Naive thymus-derived CD4-positive, alpha-beta T cell (primary cell): ENCODE measurements at regions of chr6 and their contacts with region 1.

Region 1: DNA sequence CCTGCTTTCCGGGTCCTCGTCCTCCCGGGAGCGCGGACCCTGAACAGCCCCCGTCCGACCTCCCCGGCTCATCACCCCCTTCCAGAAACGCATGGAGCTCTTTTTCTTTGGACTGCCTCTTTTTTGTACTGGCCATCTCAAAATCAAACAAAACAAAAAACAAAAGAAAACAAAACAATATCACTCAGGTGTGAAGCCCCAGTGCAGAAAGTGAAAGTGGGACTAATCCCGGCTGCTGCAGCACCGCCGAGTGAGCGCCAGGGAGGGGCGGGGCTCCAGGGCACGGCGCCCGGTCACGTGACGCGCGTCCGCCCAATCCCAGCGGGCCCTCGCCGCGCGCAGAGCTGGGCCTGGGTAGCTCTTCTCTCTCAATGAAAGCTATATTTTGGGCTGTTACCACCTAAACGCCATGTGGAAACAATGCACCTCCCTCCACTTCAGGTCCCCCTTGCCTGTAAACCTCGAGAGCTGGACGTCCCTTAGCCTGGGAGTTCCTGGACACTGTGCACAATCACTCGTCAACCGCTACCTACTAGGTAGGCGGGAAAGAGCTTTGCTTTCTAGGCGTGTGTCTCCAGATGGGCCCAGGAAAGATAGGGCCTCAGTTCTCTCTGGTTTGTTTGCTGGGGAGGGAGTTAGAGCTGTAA is 93.7 kb upstream of the PRDM1 start:
- DNase-seq: peak; percentile 82 to 91 (median 89)
- ATAC-seq: peak; percentile 93
- H3K4me3 ChIP-seq: peak overlapping the region; percentile 89
- H3K4me3 Mint-ChIP-seq: peak overlapping the region; percentile 88 to 98 (median 92)
- H3K27ac ChIP-seq: peak overlapping the region; percentile 79
- H3K27ac Mint-ChIP-seq: peak overlapping the region; percentile 87 to 97 (median 93)
- H3K4me1 ChIP-seq: peaks cover 14 to 23% of the 10 kb centered on the region in 2 donors
- H3K4me1 Mint-ChIP-seq: peaks cover 16 to 58% (median 29%) of the 10 kb centered on the region in 7 donors
- H3K27me3 ChIP-seq: peaks cover 0 to 32% of the 10 kb centered on the region in 2 donors
- H3K27me3 Mint-ChIP-seq: peaks cover 48 to 73% (median 62%) of the 10 kb centered on the region in 5 donors

Region 2: DNA sequence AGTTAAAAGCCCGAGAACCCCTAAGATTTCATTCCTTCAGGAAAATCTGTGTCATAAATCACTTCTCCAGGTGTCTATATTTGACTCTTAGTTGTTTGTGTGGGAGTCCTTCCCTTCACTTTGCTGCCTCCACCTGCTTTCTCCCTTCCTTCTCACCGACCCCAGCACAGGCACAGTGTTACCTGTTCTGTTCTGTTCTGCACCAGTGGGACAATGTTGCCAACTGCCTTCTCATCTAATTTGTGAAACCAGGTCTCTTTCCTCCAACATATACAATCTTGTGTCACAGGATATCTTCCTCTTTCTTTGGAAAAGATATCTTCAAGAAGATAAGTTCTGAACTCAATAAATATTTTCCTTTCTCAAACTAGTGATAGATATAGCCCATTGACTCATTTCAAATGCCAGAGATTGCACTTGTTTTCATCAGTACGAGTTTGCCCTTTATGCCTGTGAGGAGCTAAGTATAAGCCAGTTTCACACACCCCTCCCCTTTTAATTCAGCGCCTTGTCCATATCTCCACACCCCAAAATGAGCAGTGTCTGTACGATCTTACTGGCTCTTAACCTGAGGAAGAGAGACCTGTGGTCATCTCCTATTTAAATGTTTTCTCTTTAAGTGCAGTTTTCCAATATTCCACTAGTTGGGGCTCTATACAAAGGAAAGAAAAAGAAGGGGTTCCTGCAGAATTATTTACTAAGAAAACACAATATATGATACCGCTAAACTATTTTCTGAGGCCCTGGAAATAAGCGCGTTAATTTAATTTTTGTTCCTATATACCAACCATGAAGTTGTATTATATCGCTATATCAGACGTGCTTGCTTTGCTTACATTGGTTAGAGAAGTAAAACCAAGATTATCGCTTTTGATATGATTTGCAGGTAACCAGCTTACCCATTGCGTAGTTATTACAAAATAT is 507.9 kb before region 1 on chr6:
- CTCF ChIA-PET with region 1: no interaction called
- POLR2A ChIA-PET with region 1: no interaction called
- intact Hi-C with region 1: loop called in 1 of 2 experiments (anchors 5 kb)
- DNase-seq: peak in 5 of 9 donors; percentile 7 to 36 (median 20)
- ATAC-seq: peak; percentile 59
- H3K4me3 ChIP-seq: no peak overlapping the region
- H3K4me3 Mint-ChIP-seq: no peak overlapping the region
- H3K27ac ChIP-seq: no peak overlapping the region
- H3K27ac Mint-ChIP-seq: peak overlapping the region in 2 of 9 donors; percentile 20 to 52
- H3K4me1 ChIP-seq: peaks cover 0 to 35% of the 10 kb centered on the region in 2 donors
- H3K4me1 Mint-ChIP-seq: peaks cover 0 to 63% (median 0%) of the 10 kb centered on the region in 7 donors
- H3K27me3 ChIP-seq: no peaks in the 10 kb centered on the region
- H3K27me3 Mint-ChIP-seq: peaks cover 11 to 16% (median 13%) of the 10 kb centered on the region in 5 donors

Region 3: DNA sequence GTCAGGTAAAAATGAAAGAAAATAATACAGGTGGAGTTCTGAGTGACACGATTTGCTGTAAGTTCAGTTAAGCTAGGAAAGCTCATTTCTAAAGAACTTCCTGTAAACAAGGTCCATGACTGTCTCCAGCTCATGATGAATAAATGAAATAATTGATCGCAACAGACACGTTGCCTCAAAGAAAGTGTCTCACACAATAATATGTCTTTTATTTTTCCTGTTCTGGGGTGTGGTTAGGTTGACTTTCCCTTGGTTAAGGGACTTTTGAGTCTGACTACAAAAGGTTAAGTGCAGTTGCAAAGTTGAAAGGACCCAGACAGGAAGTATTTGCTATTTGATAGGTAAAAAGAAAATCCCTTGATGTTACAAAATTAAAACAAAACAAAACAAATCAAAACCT is 210.5 kb before region 1 on chr6:
- CTCF ChIA-PET with region 1: no interaction called
- POLR2A ChIA-PET with region 1: interaction called, 3 read pairs
- intact Hi-C with region 1: loop called in 1 of 2 experiments (anchors 2 kb)
- DNase-seq: peak in 7 of 9 donors; percentile 39 to 77 (median 63)
- ATAC-seq: peak; percentile 85
- H3K4me3 ChIP-seq: peak overlapping the region; percentile 10
- H3K4me3 Mint-ChIP-seq: peak overlapping the region; percentile 16 to 82 (median 71)
- H3K27ac ChIP-seq: peak overlapping the region; percentile 52
- H3K27ac Mint-ChIP-seq: peak overlapping the region; percentile 57 to 92 (median 71)
- H3K4me1 ChIP-seq: peaks cover 12 to 26% of the 10 kb centered on the region in 2 donors
- H3K4me1 Mint-ChIP-seq: peaks cover 31 to 80% (median 70%) of the 10 kb centered on the region in 7 donors
- H3K27me3 ChIP-seq: no peaks in the 10 kb centered on the region
- H3K27me3 Mint-ChIP-seq: no peaks in the 10 kb centered on the region

Region 4: DNA sequence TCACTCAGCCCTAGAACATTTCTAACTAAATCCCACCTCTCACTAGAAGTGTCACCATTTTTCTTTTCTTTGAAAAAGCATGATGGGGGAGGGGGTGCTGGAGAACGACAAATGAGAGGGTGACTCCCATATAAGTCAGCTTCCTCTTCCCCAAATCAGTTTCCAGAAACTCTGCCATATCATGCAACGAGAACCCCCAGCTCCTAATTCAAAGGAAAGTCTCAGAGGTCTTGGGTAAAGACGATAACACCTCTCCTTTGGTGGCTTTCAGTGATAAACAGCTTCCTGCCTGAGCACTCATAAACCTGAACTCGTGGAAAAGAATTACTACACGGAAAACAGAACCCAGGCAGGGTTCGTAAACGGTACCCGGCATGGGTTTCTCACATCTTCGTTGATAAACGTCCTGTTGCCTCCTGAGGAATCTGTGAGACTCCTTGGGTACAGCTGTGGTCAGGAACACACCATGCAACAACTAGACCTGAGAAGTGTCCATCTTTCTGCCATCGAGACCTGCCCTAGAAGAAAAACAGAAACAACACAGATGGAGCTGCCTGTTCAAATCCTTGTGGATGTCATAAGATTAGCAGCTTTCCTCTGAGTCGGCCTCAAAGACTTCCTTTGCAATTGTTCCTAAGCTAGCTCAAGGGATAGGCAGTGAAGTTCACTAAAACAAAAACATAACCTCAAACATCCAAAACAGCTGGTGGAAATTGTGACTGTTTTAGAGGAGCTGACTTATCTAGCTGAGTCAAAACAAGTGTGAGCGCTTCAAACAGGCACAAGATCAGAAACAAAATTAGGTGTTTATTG is 92.1 kb before region 1 on chr6:
- CTCF ChIA-PET with region 1: no interaction called
- POLR2A ChIA-PET with region 1: no interaction called
- intact Hi-C with region 1: loop called in 1 of 2 experiments (anchors 1 kb)
- DNase-seq: peak in 2 of 9 donors; percentile 11 to 33
- ATAC-seq: peak; percentile 52
- H3K4me3 ChIP-seq: no peak overlapping the region
- H3K4me3 Mint-ChIP-seq: peak overlapping the region in 9 of 10 donors; percentile 23 to 84 (median 70)
- H3K27ac ChIP-seq: no peak overlapping the region
- H3K27ac Mint-ChIP-seq: peak overlapping the region in 2 of 9 donors; percentile 53 to 95
- H3K4me1 ChIP-seq: peaks cover 4 to 8% of the 10 kb centered on the region in 2 donors
- H3K4me1 Mint-ChIP-seq: peaks cover 9 to 26% (median 12%) of the 10 kb centered on the region in 7 donors
- H3K27me3 ChIP-seq: no peaks in the 10 kb centered on the region
- H3K27me3 Mint-ChIP-seq: peaks cover 0 to 4% (median 0%) of the 10 kb centered on the region in 5 donors

Region 5: DNA sequence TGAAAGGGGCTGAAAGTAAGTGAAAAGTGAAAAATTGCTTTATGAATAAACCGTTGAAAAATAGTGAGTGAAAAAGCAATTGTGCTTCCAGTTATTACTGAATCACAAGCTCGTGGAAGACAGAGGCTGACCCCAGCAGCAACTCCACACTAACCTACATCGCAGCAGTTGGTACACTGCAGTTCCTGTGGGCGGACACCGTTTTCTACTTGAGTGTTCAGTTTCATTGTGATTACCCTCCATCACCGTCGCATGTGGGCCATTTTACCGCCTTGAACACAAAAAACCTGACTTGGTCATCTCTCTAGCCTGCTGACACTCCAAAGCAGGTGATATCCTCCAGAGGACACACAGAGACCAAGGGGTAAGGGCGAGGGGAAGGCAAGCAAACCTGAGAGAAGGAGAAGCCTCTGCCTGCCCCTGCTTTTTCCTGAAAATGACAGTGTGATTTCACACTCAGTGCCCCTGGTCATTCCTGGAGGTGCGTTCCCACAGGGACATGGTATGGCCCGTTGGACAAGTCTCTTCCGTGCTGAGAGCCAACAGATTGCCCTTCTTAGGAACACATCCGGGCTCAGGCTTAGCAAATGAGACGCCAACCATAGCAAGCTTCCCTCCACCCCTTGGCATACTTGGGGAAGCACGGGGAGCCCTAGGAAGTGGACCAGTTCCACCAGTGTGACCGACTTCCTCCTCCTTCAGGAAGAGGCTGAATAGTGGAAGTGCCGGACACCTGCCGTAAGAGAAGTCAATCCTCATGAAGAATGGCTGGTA is 122.2 kb after region 1 on chr6:
- CTCF ChIA-PET with region 1: interaction called, 5 read pairs
- POLR2A ChIA-PET with region 1: interaction called, 10 read pairs
- intact Hi-C with region 1: loop called in 1 of 2 experiments (anchors 1 kb)
- DNase-seq: peak in 1 of 9 donors; percentile 64
- ATAC-seq: no peak
- H3K4me3 ChIP-seq: peak overlapping the region; percentile 28
- H3K4me3 Mint-ChIP-seq: peak overlapping the region in 3 of 10 donors; percentile 11 to 52 (median 15)
- H3K27ac ChIP-seq: no peak overlapping the region
- H3K27ac Mint-ChIP-seq: peak overlapping the region in 2 of 9 donors; percentile 47 to 59
- H3K4me1 ChIP-seq: peaks cover 39 to 78% of the 10 kb centered on the region in 2 donors
- H3K4me1 Mint-ChIP-seq: peaks cover 39 to 84% (median 61%) of the 10 kb centered on the region in 7 donors
- H3K27me3 ChIP-seq: no peaks in the 10 kb centered on the region
- H3K27me3 Mint-ChIP-seq: peaks cover 0 to 5% (median 0%) of the 10 kb centered on the region in 5 donors

Region 6: DNA sequence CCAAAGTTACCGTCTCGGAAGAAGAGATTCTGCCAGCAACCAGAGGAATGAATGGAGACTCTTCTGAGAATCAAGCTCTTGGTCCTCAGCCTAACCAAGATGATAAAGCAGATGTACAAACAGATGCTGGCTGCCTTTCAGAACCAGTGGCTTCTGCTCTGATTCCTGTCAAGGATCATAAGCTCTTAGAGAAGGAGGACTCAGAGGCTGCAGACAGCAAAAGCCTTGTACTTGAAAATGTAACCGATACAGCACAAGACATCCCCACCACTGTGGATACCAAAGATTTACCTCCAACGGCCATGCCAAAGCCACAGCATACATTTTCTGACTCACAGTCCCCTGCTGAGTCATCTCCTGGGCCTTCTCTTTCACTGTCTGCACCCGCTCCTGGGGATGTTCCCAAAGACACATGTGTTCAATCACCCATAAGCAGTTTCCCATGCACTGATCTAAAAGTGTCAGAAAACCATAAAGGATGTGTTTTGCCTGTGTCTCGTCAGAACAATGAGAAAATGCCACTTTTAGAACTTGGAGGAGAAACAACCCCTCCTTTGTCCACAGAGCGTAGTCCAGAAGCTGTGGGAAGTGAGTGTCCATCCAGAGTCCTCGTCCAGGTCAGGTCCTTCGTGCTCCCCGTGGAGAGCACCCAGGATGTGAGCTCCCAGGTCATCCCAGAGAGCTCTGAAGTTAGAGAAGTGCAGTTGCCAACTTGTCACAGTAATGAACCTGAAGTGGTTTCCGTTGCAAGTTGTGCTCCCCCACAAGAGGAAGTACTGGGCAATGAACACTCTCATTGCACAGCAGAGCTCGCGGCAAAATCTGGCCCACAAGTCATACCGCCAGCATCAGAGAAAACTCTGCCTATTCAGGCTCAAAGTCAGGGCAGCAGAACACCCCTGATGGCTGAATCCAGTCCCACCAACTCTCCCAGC is 527.3 kb after region 1 on chr6:
- CTCF ChIA-PET with region 1: no interaction called
- POLR2A ChIA-PET with region 1: no interaction called
- intact Hi-C with region 1: loop called (anchors 5 kb)
- DNase-seq: peak; percentile 38 to 80 (median 72)
- ATAC-seq: peak; percentile 68
- H3K4me3 ChIP-seq: peak overlapping the region; percentile 69
- H3K4me3 Mint-ChIP-seq: peak overlapping the region; percentile 82 to 96 (median 93)
- H3K27ac ChIP-seq: peak overlapping the region; percentile 86
- H3K27ac Mint-ChIP-seq: peak overlapping the region; percentile 92 to 99 (median 95)
- H3K4me1 ChIP-seq: peaks cover 42 to 47% of the 10 kb centered on the region in 2 donors
- H3K4me1 Mint-ChIP-seq: peaks cover 36 to 87% (median 71%) of the 10 kb centered on the region in 7 donors
- H3K27me3 ChIP-seq: no peaks in the 10 kb centered on the region
- H3K27me3 Mint-ChIP-seq: no peaks in the 10 kb centered on the region